ENCODE measurements at regions of chr2 and their contacts with region 1.

Region 1: DNA sequence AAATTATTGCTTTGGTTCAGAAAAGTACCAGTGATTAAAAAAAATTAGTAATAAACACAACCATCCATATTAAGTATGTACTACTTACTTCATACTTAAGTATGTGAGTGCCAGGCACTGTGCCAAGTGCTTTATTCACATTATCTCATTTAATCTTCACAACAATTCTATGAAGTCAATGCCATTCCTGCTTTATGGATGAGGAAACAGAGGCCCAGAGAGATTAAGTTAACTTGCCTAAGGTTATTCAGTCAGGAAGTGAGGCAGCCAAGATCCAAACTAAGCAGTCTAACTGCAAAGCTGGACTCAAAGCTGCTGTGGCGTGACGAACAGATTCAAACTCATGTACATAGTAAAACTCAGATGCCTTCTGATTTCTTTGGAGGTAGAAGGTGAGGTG is 22.3 kb downstream of the DTNB start:
- DNase-seq: peak; percentile 56
- H3K4me3 Mint-ChIP-seq: no peak overlapping the region
- H3K27ac Mint-ChIP-seq: no peak overlapping the region
- H3K4me1 Mint-ChIP-seq: peaks cover 31% of the 10 kb centered on the region
- H3K27me3 Mint-ChIP-seq: no peaks in the 10 kb centered on the region
- CTCF ChIP-seq: no peak

Region 2: DNA sequence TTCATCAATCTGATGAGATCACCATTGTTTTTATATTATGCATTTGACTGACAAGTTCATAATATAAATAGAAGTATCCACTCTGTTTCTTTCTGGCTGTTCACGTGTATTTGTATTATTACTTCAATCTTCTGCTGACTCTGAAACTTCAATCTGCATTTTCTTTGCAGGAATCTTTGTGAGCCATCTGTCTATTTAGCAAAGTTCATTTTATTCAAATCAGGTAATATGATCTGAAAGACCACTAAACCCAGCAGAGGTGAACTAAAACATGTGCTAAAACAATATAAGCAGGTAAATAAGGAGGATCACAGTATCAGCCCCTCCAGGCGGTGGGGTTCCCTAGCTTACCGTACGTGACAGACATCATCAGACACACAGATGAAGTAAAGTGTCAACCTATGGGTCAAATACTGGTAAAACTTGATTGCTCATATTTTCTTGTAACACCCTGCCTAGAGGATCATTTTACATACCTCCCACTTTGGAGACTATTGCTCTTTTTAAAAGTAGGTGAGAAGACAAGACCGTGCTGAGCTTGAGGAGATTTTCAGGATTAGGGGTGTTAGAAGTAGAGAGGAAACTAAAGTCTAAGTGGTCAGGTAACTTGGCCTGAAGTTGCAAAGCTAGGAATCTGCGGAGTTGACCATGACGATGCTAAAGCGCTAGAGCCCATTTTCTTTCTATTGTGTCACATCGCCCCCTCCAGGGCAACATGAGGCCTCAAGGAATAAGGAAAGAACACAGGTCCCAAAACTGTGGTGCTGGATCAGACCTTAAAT is 13.3 kb after region 1 on chr2:
- CTCF ChIA-PET with region 1: interaction called, 16 read pairs
- POLR2A ChIA-PET with region 1: interaction called, 5 read pairs
- intact Hi-C with region 1: no loop called
- DNase-seq: peak; percentile 88
- H3K4me3 Mint-ChIP-seq: peak overlapping the region; percentile 15
- H3K27ac Mint-ChIP-seq: peak overlapping the region; percentile 50
- H3K4me1 Mint-ChIP-seq: peaks cover 31% of the 10 kb centered on the region
- H3K27me3 Mint-ChIP-seq: no peaks in the 10 kb centered on the region
- CTCF ChIP-seq: peak; percentile 43

Region 3: GRCh38 chr2:25920326-25920725 is 269.3 kb after region 1 on chr2:
- CTCF ChIA-PET with region 1: no interaction called
- POLR2A ChIA-PET with region 1: no interaction called
- intact Hi-C with region 1: no loop called
- DNase-seq: peak; percentile 57
- H3K4me3 Mint-ChIP-seq: no peak overlapping the region
- H3K27ac Mint-ChIP-seq: no peak overlapping the region
- H3K4me1 Mint-ChIP-seq: no peaks in the 10 kb centered on the region
- H3K27me3 Mint-ChIP-seq: no peaks in the 10 kb centered on the region
- CTCF ChIP-seq: no peak